ENCODE measurements at regions of chr5 and their contacts with region 1.

Region 1: DNA sequence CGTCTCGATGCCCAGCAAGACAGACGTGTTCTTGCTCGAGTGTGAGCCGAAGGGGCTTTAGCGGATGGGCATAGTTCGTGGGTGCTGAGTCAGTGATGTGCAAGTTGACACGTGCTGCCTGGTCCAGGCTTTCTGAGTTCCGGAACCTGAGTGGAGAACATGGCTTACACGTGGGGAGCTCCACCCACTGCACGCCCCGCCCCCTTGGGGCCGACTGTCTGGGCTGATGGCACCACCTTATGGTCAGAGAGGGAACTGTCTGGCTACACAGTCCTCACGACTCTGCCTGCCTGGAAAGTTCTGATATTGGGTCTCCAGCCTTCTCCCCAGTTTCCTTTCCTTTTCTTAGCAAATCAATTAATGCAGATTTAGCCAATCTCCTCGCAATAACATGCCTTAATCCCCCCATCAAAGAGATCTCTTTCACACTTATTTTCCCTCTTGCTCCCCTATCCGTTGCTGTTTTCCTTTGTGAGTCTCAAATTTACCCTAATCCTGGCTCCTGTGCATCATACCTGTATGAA is 3.8 kb upstream of the STC2 start:
- DNase-seq: peak; percentile 86
- H3K4me3 ChIP-seq: no peak overlapping the region
- H3K27ac ChIP-seq: no peak overlapping the region
- H3K4me1 ChIP-seq: peaks cover 29% of the 10 kb centered on the region
- H3K27me3 ChIP-seq: no peaks in the 10 kb centered on the region
- CTCF ChIP-seq: peak; percentile 94 to 97
- POLR2A ChIP-seq: no peak

Region 2: GRCh38 chr5:172707285-172708182 is 624.5 kb before region 1 on chr5:
- CTCF ChIA-PET with region 1: interaction called, 11 read pairs
- POLR2A ChIA-PET with region 1: no interaction called
- dilution Hi-C with region 1: no loop called
- intact Hi-C with region 1: loop called (anchors 2 kb)
- DNase-seq: peak; percentile 62
- H3K4me3 ChIP-seq: no peak overlapping the region
- H3K27ac ChIP-seq: no peak overlapping the region
- H3K4me1 ChIP-seq: no peaks in the 10 kb centered on the region
- H3K27me3 ChIP-seq: no peaks in the 10 kb centered on the region
- CTCF ChIP-seq: peak; percentile 61 to 64
- POLR2A ChIP-seq: no peak

Region 3: GRCh38 chr5:173057062-173057924 is 274.7 kb before region 1 on chr5:
- CTCF ChIA-PET with region 1: no interaction called
- POLR2A ChIA-PET with region 1: no interaction called
- dilution Hi-C with region 1: no loop called
- intact Hi-C with region 1: loop called (anchors 1 kb)
- DNase-seq: peak; percentile 99
- H3K4me3 ChIP-seq: peak overlapping the region; percentile 83 to 89 (median 86)
- H3K27ac ChIP-seq: peak overlapping the region; percentile 86
- H3K4me1 ChIP-seq: peaks cover 13% of the 10 kb centered on the region
- H3K27me3 ChIP-seq: no peaks in the 10 kb centered on the region
- CTCF ChIP-seq: peak in 1 of 2 donors; percentile 28
- POLR2A ChIP-seq: peak; percentile 37

Region 4: GRCh38 chr5:173178369-173178910 is 153.6 kb before region 1 on chr5:
- CTCF ChIA-PET with region 1: no interaction called
- POLR2A ChIA-PET with region 1: no interaction called
- dilution Hi-C with region 1: no loop called
- intact Hi-C with region 1: no loop called
- DNase-seq: no peak
- H3K4me3 ChIP-seq: no peak overlapping the region
- H3K27ac ChIP-seq: no peak overlapping the region
- H3K4me1 ChIP-seq: no peaks in the 10 kb centered on the region
- H3K27me3 ChIP-seq: no peaks in the 10 kb centered on the region
- CTCF ChIP-seq: no peak
- POLR2A ChIP-seq: no peak

Region 5: GRCh38 chr5:173238312-173239232 is 93.4 kb before region 1 on chr5:
- CTCF ChIA-PET with region 1: no interaction called
- POLR2A ChIA-PET with region 1: no interaction called
- dilution Hi-C with region 1: no loop called
- intact Hi-C with region 1: loop called (anchors 2 kb)
- DNase-seq: no peak
- H3K4me3 ChIP-seq: peak overlapping the region in 2 of 3 experiments; percentile 16 to 20
- H3K27ac ChIP-seq: no peak overlapping the region
- H3K4me1 ChIP-seq: peaks cover 10% of the 10 kb centered on the region
- H3K27me3 ChIP-seq: peaks cover 82 to 98% of the 10 kb centered on the region in 2 experiments
- CTCF ChIP-seq: no peak
- POLR2A ChIP-seq: no peak

Region 6: DNA sequence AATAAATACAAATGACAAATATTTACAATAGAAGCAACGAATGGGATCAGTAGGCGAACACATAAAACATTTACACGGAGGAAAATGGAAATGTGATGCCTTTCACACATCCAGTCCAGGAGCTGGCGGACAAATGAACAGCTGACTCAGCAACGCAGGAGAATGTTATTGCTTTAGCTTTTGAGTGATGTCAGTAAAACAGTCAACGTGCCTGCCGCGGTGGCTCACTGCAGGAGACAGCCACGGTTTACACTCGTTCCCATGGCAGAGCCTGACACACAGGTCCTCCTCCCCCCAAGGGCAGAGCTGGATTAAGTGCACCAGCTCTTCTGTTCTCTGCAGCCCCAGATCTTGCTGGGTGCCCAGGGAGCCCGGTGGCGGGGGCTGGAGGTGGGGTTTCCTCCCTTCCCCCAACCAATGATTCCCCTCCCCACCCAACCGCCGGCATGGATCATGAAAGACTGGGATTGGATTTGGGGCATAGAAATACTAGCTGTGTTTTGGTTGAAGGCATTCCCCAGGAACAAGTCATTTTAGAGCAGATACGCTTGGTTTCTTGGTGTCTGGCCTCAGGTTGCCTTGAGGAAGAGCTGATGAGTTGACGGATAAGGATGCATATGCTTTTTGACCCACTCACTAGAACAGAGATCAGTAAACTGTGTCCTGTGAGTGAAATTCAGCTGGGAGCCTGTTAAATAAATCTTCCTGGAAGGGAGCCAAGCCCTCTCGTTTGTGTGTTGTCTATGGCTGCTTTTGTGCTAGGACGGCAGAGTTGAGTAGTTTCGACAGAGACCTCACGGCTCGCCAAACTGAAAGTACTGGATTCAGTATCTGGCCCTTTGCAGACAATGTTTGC is 16.3 kb before region 1 on chr5:
- CTCF ChIA-PET with region 1: interaction called, 14 read pairs
- POLR2A ChIA-PET with region 1: interaction called, 3 read pairs
- dilution Hi-C with region 1: no loop called
- intact Hi-C with region 1: no loop called
- DNase-seq: no peak
- H3K4me3 ChIP-seq: no peak overlapping the region
- H3K27ac ChIP-seq: no peak overlapping the region
- H3K4me1 ChIP-seq: no peaks in the 10 kb centered on the region
- H3K27me3 ChIP-seq: no peaks in the 10 kb centered on the region
- CTCF ChIP-seq: no peak
- POLR2A ChIP-seq: no peak

Region 7: GRCh38 chr5:173342813-173343755 is 11.1 kb after region 1 on chr5:
- CTCF ChIA-PET with region 1: no interaction called
- POLR2A ChIA-PET with region 1: no interaction called
- dilution Hi-C with region 1: no loop called
- intact Hi-C with region 1: no loop called
- DNase-seq: no peak
- H3K4me3 ChIP-seq: no peak overlapping the region
- H3K27ac ChIP-seq: no peak overlapping the region
- H3K4me1 ChIP-seq: no peaks in the 10 kb centered on the region
- H3K27me3 ChIP-seq: no peaks in the 10 kb centered on the region
- CTCF ChIP-seq: no peak
- POLR2A ChIP-seq: no peak

Region 8: GRCh38 chr5:173581408-173582215 is 249.6 kb after region 1 on chr5:
- CTCF ChIA-PET with region 1: interaction called, 10 read pairs
- POLR2A ChIA-PET with region 1: no interaction called
- dilution Hi-C with region 1: no loop called
- intact Hi-C with region 1: no loop called
- DNase-seq: peak; percentile 33
- H3K4me3 ChIP-seq: no peak overlapping the region
- H3K27ac ChIP-seq: no peak overlapping the region
- H3K4me1 ChIP-seq: no peaks in the 10 kb centered on the region
- H3K27me3 ChIP-seq: peaks cover 2 to 6% of the 10 kb centered on the region in 2 experiments
- CTCF ChIP-seq: peak; percentile 75 to 87
- POLR2A ChIP-seq: no peak

Region 9: DNA sequence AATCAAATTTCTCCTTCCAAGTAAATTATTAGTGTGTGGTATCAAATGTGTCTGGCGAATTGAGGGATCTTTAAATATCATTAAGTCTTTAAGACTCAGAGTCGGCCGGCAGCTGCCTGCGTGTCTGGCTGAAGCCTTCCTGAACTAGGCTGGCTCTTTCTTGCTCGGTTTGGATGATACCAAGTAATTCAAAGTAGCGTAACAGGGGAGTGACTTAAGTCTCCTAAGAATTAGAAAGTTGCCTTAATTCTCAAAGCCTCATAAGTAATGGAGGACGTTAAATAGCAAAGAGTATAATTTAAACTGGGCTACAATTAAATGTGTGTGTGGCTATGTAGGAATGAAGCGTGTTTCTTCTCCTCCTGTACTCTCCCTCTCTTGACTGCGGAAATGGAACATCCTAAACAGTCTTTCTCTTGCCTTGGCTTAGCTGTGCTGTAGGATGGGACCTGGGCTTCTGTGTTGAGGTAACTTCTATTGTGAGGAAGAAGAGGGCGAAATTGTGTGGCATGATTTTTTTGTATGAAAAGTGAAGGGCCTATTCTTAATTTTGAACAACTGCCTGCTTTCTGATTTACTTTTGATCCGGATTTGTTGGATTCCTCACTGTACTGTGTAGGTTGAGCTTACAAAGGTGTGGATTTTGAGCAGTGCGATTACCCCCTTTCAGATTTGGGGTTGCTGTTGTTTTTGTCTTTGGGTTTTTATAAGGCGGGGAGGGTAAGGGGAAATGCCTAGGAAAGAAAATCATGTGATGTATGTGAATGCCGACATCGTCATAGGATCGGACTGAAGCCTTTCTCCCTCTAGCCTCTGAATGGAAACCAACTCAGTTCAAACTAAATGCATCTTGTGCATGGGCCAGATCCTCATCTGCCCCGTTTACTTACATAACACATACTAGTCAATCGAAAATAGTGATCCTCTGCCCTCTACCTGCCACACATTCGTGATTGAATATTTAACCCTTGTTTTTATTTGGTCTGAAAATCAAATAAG is 586.1 kb after region 1 on chr5:
- CTCF ChIA-PET with region 1: no interaction called
- POLR2A ChIA-PET with region 1: no interaction called
- dilution Hi-C with region 1: no loop called
- intact Hi-C with region 1: loop called (anchors 2 kb)
- DNase-seq: peak; percentile 93
- H3K4me3 ChIP-seq: peak overlapping the region; percentile 44 to 93 (median 65)
- H3K27ac ChIP-seq: peak overlapping the region; percentile 99
- H3K4me1 ChIP-seq: peaks cover 28% of the 10 kb centered on the region
- H3K27me3 ChIP-seq: no peaks in the 10 kb centered on the region
- CTCF ChIP-seq: no peak
- POLR2A ChIP-seq: peak; percentile 94